A673 (cell line): ENCODE measurements at regions of chr16 and their contacts with region 1.

Region 1: GRCh38 chr16:30922960-30923535 is 324 bp upstream of the FBXL19 start:
- DNase-seq: peak; percentile 100
- H3K4me3 ChIP-seq: peak overlapping the region; percentile 64
- H3K27ac ChIP-seq: peak overlapping the region; percentile 93
- H3K4me1 ChIP-seq: peaks cover 14% of the 10 kb centered on the region
- H3K27me3 ChIP-seq: no peaks in the 10 kb centered on the region
- CTCF ChIP-seq: no peak

Region 2: GRCh38 chr16:30747799-30748634 is 175.0 kb before region 1 on chr16 and contains the start of gene PHKG2:
- CTCF ChIA-PET with region 1: no interaction called
- POLR2A ChIA-PET with region 1: no interaction called
- intact Hi-C with region 1: loop called (anchors 5 kb)
- DNase-seq: peak; percentile 100
- H3K4me3 ChIP-seq: peak within 1 kb of the TSS; percentile 64
- H3K27ac ChIP-seq: peak within 1 kb of the TSS; percentile 84
- H3K4me1 ChIP-seq: no peaks in the 10 kb centered on the region
- H3K27me3 ChIP-seq: no peaks in the 10 kb centered on the region
- CTCF ChIP-seq: no peak
- total RNA-seq, gene PHKG2: 35.3 and 37.8 TPM in 2 replicates

Region 3: GRCh38 chr16:30775392-30776188 is 147.5 kb before region 1 on chr16:
- CTCF ChIA-PET with region 1: no interaction called
- POLR2A ChIA-PET with region 1: no interaction called
- intact Hi-C with region 1: loop called (anchors 5 kb)
- DNase-seq: peak; percentile 89
- H3K4me3 ChIP-seq: peak overlapping the region; percentile 72
- H3K27ac ChIP-seq: peak overlapping the region; percentile 90
- H3K4me1 ChIP-seq: peaks cover 4% of the 10 kb centered on the region
- H3K27me3 ChIP-seq: no peaks in the 10 kb centered on the region
- CTCF ChIP-seq: no peak

Region 4: DNA sequence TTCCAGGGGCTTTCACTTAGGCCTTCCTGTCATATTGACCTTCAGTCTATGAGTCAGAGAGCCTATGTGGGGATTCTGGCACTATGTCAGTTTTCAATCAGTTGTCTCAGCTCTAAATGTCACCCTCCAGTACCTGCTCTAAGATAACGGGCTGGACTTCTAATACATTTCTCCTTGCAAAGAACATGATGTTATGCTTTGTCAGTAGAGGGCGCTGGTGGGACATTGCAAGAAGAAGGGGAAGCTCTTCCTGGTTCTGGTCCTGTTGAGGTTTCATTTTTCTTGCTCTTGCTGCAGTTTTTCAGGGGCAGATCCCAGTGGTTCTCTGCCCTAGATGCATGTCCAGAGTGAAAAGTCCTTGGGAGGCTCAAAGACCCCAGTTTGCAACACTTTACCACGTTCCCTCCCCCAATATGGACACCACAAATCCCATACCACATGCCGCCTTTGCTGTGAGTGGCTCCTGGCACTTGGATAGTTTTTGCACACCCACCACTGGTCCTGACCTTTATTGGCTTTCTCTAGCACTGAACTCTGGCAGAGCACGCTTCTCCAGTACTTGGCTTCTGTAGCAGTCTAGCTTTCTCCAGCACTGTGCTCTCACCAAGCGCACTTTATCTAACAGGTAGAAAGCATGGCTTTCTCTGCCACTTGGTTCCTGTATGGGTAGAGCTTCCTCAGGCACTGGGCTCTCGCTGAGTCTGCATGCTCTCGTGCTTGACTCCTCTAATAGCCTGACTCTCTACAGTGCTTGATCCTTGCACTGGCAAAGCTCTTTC is 78.2 kb before region 1 on chr16:
- CTCF ChIA-PET with region 1: interaction called, 6 read pairs
- POLR2A ChIA-PET with region 1: no interaction called
- intact Hi-C with region 1: loop called (anchors 1 kb)
- DNase-seq: peak; percentile 92
- H3K4me3 ChIP-seq: no peak overlapping the region
- H3K27ac ChIP-seq: no peak overlapping the region
- H3K4me1 ChIP-seq: no peaks in the 10 kb centered on the region
- H3K27me3 ChIP-seq: no peaks in the 10 kb centered on the region
- CTCF ChIP-seq: peak; percentile 86

Region 5: DNA sequence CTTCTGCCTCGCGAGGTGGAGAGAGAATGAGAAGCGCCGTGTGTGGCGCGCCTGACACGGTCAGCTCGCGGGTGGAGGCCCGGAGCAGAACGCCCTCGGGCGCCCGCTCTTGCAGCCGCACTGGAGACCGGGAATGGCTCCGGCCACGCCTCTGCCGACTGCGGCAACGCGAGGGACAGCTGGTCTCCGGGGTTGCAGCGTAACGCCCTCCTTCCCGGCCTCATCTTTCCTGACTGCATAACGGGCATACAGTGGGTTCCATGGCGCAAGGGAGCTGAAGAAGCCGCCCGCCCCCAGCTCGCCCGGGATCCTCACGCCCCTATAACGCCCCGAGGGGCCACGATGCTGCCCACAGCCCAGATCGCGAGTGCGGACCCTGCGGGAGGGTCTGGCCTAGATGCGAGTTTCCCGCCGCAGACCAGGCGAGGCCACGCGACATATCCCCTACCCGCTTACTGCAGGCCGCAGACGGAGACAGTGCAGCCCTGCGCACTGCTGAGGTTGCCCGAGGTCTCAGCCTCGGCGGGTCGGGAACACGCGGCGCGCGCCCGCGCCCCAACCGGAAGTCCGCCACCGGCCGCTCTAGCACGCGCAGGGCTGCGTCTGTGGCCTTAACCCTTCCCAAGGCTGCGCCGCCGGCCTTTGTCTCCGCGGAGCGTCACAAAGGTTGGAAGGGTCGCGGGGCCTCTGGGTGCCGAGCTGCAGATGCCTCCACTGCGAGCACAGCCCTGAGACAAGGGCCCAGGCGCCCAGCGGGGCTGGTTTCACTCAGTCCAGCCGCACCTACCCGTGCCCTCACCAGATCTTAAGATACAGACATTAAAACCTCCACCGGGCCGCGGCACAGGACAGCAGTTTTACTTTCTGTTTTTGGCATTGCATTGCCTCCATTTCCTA is 48.0 kb before region 1 on chr16:
- CTCF ChIA-PET with region 1: no interaction called
- POLR2A ChIA-PET with region 1: no interaction called
- intact Hi-C with region 1: loop called (anchors 1 kb)
- DNase-seq: peak; percentile 94
- H3K4me3 ChIP-seq: peak overlapping the region; percentile 85
- H3K27ac ChIP-seq: peak overlapping the region; percentile 84
- H3K4me1 ChIP-seq: no peaks in the 10 kb centered on the region
- H3K27me3 ChIP-seq: no peaks in the 10 kb centered on the region
- CTCF ChIP-seq: no peak

Region 6: DNA sequence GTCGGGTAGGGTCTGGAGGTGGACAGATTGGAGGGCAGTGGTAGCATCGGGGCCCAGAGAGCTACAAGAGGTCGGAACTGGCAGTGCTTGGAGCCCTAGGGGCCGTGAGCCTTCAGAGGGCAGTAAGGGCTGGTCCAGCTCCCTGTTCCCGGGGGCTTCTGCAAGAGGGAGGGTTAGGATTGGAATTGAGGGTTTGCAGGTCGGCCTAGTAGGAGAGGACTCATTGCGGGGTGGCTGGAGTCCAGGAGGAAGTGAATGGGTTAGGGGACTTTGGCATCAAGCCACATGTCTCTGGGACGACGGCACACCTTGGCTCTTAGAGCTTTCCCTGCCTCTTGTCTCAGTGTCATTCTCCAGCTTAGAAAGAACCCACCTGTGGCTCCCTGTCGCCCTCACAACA is 12.5 kb after region 1 on chr16:
- CTCF ChIA-PET with region 1: no interaction called
- POLR2A ChIA-PET with region 1: interaction called, 21 read pairs
- intact Hi-C with region 1: no loop called
- DNase-seq: no peak
- H3K4me3 ChIP-seq: no peak overlapping the region
- H3K27ac ChIP-seq: no peak overlapping the region
- H3K4me1 ChIP-seq: no peaks in the 10 kb centered on the region
- H3K27me3 ChIP-seq: no peaks in the 10 kb centered on the region
- CTCF ChIP-seq: no peak